Spleen (tissue), 13 donors: ENCODE measurements at regions of chr16 and their contacts with region 1.

Region 1: GRCh38 chr16:84617791-84618580 is at the start of gene COTL1:
- DNase-seq: peak; percentile 98
- H3K4me3 ChIP-seq: peak within 1 kb of the TSS; percentile 74 to 100 (median 96)
- H3K27ac ChIP-seq: peak within 1 kb of the TSS; percentile 87 to 95 (median 91)
- H3K4me1 ChIP-seq: peaks cover 25 to 93% (median 59%) of the 10 kb centered on the region in 6 donors
- H3K27me3 ChIP-seq: no peaks in the 10 kb centered on the region
- CTCF ChIP-seq: no peak
- POLR2A ChIP-seq: peak in 2 of 3 donors; percentile 79 to 82
- total RNA-seq, gene COTL1: 284 to 655 (median 457) TPM

Region 2: DNA sequence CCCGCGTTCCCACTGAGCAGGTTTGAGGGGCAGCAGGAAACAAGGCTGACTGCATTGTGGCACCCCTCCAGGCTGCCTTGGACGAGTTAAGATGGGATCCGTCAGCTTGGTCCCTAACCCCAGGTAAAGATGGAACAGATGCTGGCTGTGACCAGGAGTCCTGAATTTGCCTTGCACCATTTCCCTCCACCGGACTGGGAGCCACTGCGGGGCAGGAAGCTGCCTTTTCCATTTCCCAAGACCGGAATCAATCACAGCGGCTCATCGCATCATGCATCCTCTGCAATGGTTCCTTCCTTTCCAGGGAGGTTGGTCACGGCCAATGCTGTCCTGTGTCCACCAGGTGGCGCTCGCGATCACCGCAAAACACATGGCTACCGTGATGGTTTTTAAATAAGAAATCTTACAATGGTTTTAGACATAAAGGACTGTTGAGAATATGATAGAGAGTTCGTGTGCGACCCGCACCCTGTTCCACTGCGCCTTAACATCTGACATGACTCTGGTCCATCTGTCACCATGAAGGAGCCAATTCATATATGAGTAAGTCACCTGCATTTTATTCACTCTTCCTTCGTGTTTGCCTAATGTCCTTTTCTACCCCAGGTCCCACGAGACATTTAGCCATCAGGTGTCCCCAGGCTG is 106.7 kb before region 1 on chr16:
- intact Hi-C with region 1: loop called (anchors 5 kb)
- DNase-seq: peak; percentile 96
- H3K4me3 ChIP-seq: peak overlapping the region in 1 of 8 donors; percentile 36
- H3K27ac ChIP-seq: peak overlapping the region in 4 of 8 donors; percentile 5 to 44 (median 30)
- H3K4me1 ChIP-seq: peaks cover 11 to 77% (median 51%) of the 10 kb centered on the region in 6 donors
- H3K27me3 ChIP-seq: no peaks in the 10 kb centered on the region
- CTCF ChIP-seq: peak; percentile 96 to 99 (median 98)
- POLR2A ChIP-seq: no peak

Region 3: DNA sequence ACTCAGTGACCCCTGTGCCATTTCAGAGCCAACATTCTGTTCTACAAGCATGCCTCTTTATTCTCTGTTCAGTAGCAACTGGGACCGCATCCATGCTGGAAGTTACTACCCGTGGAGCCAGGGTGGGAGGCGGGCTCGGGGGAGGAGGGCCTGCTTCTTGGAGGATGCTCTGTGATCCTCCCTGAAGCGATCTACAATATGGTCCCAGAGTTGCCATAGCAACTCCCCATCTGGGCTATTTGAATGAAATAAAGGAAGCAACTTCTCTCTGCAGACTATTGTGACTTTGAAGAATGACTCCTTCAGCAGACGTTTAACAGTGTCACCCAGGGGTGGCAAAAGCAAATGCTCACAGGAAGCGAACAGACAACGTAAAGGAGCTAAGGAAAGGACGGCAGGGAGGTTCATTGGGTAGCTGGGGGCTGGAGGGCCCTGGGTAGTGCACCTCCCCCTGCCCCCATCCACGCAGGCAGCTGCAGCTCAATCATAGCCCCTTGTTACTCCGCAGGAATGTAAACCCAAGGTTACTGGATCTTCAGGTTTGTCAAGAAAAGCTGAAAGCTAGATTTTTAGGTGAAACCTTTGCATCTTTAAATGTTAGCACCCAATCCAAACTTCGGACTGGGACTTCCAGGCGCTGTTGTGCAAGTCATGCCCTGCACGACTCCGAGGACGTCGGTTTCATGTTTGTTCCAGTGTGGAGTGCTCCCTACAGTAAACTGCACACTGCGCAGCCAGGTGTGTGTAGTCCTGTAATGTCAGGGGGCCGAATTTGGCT is 62.4 kb before region 1 on chr16:
- intact Hi-C with region 1: loop called (anchors 10 kb)
- DNase-seq: peak; percentile 46
- H3K4me3 ChIP-seq: no peak overlapping the region
- H3K27ac ChIP-seq: peak overlapping the region in 2 of 8 donors; percentile 18 to 76
- H3K4me1 ChIP-seq: peaks cover 3 to 63% (median 29%) of the 10 kb centered on the region in 6 donors
- H3K27me3 ChIP-seq: no peaks in the 10 kb centered on the region
- CTCF ChIP-seq: no peak
- POLR2A ChIP-seq: no peak

Region 4: DNA sequence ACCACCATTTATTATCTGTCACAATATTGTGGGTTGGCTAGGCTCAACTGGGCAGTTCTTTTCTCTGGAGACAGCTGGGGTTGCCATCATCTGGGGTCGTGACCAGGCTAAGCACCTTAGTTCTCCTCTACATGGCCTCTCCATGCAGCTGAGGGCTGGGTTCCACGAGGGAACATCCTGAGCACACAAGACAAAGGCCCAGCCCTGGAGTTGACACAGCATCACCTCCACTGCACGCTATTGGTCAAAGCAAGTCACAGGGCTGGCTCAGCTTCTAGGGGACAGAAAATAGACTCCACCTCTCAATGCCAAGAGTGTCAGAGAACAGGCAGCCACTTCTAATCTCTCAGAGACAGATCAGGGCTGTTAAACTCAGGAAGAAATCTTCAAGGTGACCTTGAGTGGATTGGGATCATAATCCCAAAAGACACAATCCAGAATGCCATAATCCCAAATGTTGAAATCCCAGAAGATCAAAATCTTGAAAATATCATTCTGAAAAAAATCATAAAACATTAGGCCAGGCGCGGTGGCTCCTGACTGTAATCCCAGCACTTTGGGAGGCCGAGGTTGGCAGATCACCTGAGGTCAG is 68.8 kb after region 1 on chr16:
- intact Hi-C with region 1: no loop called
- DNase-seq: no peak
- H3K4me3 ChIP-seq: no peak overlapping the region
- H3K27ac ChIP-seq: no peak overlapping the region
- H3K4me1 ChIP-seq: peaks cover 0 to 17% (median 3%) of the 10 kb centered on the region in 6 donors
- H3K27me3 ChIP-seq: peaks cover 0 to 9% (median 0%) of the 10 kb centered on the region in 7 donors
- CTCF ChIP-seq: no peak
- POLR2A ChIP-seq: no peak

Region 5: GRCh38 chr16:84726079-84726668 is 108.2 kb after region 1 on chr16:
- intact Hi-C with region 1: loop called (anchors 5 kb)
- DNase-seq: peak; percentile 95
- H3K4me3 ChIP-seq: peak overlapping the region in 5 of 8 donors; percentile 19 to 54 (median 22)
- H3K27ac ChIP-seq: peak overlapping the region; percentile 14 to 83 (median 73)
- H3K4me1 ChIP-seq: peaks cover 51 to 100% (median 75%) of the 10 kb centered on the region in 6 donors
- H3K27me3 ChIP-seq: no peaks in the 10 kb centered on the region
- CTCF ChIP-seq: peak; percentile 79 to 98 (median 93)
- POLR2A ChIP-seq: no peak

Region 6: GRCh38 chr16:84738255-84739038 is 120.5 kb after region 1 on chr16:
- intact Hi-C with region 1: loop called (anchors 5 kb)
- DNase-seq: peak; percentile 85
- H3K4me3 ChIP-seq: peak overlapping the region in 2 of 8 donors; percentile 11 to 50
- H3K27ac ChIP-seq: peak overlapping the region in 3 of 8 donors; percentile 12 to 52 (median 35)
- H3K4me1 ChIP-seq: peaks cover 9 to 89% (median 37%) of the 10 kb centered on the region in 6 donors
- H3K27me3 ChIP-seq: no peaks in the 10 kb centered on the region
- CTCF ChIP-seq: peak; percentile 66 to 92 (median 88)
- POLR2A ChIP-seq: no peak